Aorta (tissue), 5 donors: ENCODE measurements at regions of chr3 and their contacts with region 1.

Region 1: DNA sequence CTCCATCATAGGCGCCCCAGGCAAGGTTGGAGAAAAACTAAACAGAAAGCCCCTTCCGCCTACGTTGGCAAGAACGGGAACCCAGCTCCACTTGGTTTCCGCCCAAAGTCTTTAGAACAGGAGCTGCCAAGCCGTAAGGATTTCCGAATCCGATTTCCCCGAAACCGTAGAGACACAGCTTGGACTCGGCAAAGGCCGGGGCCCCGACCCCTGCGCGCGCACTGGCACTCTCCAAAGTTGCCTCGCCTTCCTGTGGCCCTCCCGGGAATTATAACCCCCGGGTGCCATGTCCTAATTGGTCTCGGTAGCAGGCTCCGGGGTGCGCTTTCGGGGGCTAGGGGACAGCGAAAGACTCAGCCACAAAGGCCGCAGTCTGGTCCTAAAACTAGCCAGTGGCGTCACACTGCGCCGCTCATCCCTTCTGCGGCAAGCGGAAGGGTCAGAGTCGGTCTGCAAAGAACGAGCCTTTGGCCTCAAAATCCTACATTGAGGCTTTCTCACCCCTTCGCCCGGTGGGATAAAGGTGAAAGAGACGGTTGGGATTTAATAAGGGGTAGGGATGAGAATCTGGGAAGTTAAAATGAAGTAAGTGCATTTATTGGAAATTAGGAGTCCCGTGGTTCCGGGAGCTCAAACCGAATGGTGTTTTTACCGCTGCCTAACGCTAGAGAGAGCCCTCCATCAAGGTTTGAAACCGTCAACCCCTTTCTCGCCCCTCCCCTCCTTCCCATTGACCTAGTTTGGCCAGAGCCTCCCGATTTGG is 6.8 kb downstream of the BCL6 start:
- DNase-seq: peak; percentile 90 to 93
- ATAC-seq: peak; percentile 80
- H3K4me3 ChIP-seq: peak overlapping the region; percentile 1 to 69
- H3K27ac ChIP-seq: peak overlapping the region; percentile 46 to 62
- H3K4me1 ChIP-seq: peaks cover 0 to 3% of the 10 kb centered on the region in 2 donors
- H3K27me3 ChIP-seq: no peaks in the 10 kb centered on the region

Region 2: GRCh38 chr3:186239321-186239720 is 1499.2 kb before region 1 on chr3:
- intact Hi-C with region 1: no loop called
- DNase-seq: no peak
- ATAC-seq: no peak
- H3K4me3 ChIP-seq: no peak overlapping the region
- H3K27ac ChIP-seq: no peak overlapping the region
- H3K4me1 ChIP-seq: no peaks in the 10 kb centered on the region
- H3K27me3 ChIP-seq: no peaks in the 10 kb centered on the region

Region 3: GRCh38 chr3:187841598-187841959 is 103.1 kb after region 1 on chr3:
- intact Hi-C with region 1: no loop called
- DNase-seq: no peak
- ATAC-seq: no peak
- H3K4me3 ChIP-seq: no peak overlapping the region
- H3K27ac ChIP-seq: no peak overlapping the region
- H3K4me1 ChIP-seq: no peaks in the 10 kb centered on the region
- H3K27me3 ChIP-seq: no peaks in the 10 kb centered on the region

Region 4: GRCh38 chr3:187858041-187858440 is 119.5 kb after region 1 on chr3:
- intact Hi-C with region 1: no loop called
- DNase-seq: no peak
- ATAC-seq: peak; percentile 66
- H3K4me3 ChIP-seq: no peak overlapping the region
- H3K27ac ChIP-seq: no peak overlapping the region
- H3K4me1 ChIP-seq: no peaks in the 10 kb centered on the region
- H3K27me3 ChIP-seq: no peaks in the 10 kb centered on the region

Region 5: DNA sequence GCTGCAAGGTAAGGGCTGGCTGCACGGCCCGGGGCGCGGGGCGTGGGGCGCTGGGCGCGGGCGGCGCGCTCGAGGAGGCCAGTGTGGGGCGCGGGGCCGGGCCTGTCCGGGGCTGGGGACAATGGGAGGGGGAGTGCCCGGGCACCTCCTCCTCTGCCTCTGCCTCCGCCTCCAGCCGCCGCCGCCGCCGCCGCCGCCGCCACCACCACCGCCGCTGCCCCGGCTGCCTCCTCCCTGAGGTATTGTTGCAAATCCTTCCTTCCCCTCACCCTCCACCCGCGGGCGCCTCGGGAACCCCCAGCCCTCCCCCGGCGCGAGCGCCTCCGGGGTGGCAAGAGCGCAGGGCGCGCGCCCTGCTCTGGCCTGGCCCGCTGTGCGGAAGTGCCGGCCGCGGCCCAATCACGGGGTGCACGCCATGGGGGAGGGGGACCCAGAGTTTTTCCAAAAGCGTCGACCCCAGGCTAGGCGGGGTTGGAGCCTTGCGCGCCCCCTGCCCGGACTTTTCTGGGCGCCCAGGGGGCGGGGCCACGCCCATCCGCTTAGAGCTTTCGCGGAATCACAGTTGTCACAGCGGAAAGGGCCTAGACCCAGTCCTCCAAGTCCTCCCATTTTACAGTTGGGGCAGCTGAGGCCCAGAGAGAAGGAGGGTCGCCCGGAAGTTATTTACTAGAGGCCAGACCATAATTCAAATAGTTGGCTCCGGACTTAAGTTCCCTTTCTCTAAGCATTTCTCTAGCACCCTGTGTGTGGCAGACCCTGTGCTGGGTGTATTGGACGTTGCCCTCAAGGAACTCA is 415.7 kb after region 1 on chr3 and contains the start of gene LPP:
- intact Hi-C with region 1: loop called (anchors 5 kb)
- DNase-seq: peak; percentile 90 to 92
- ATAC-seq: peak; percentile 88
- H3K4me3 ChIP-seq: peak within 1 kb of the TSS; percentile 29 to 77
- H3K27ac ChIP-seq: peak within 1 kb of the TSS; percentile 98 to 99
- H3K4me1 ChIP-seq: peaks cover 3 to 8% of the 10 kb centered on the region in 2 donors
- H3K27me3 ChIP-seq: no peaks in the 10 kb centered on the region
- total RNA-seq, gene LPP: 995 to 2,536 TPM

Region 6: GRCh38 chr3:188262913-188263683 is 524.6 kb after region 1 on chr3:
- intact Hi-C with region 1: loop called (anchors 2 to 5 kb)
- DNase-seq: peak; percentile 60 to 79
- ATAC-seq: peak; percentile 66
- H3K4me3 ChIP-seq: no peak overlapping the region
- H3K27ac ChIP-seq: peak overlapping the region; percentile 100
- H3K4me1 ChIP-seq: peaks cover 9 to 34% of the 10 kb centered on the region in 2 donors
- H3K27me3 ChIP-seq: no peaks in the 10 kb centered on the region

Region 7: DNA sequence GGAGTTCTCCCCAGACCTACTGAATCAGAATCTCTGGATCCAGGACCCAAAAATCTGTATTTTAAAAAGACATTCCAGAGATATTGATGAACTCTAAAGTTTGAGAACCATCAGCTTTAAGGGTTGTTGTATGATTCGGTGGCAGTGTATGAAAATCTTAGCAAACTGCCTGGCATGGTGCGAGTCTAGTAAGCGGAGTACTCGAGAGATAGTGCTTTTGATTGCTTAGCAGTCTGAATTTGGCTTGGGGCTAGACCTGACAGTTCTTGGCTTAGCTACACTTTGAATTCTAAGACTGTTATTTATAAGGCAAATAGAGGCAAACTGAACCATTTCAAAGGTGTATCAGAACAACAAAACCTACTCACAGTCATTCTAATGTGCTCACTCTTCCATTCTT is 744.4 kb after region 1 on chr3:
- intact Hi-C with region 1: loop called (anchors 5 to 10 kb)
- DNase-seq: no peak
- ATAC-seq: peak; percentile 22
- H3K4me3 ChIP-seq: no peak overlapping the region
- H3K27ac ChIP-seq: no peak overlapping the region
- H3K4me1 ChIP-seq: peaks cover 5 to 10% of the 10 kb centered on the region in 2 donors
- H3K27me3 ChIP-seq: no peaks in the 10 kb centered on the region

Region 8: GRCh38 chr3:188954590-188955208 is 1216.2 kb after region 1 on chr3:
- intact Hi-C with region 1: loop called (anchors 2 to 5 kb)
- DNase-seq: peak; percentile 87 to 92
- ATAC-seq: peak; percentile 88
- H3K4me3 ChIP-seq: no peak overlapping the region
- H3K27ac ChIP-seq: no peak overlapping the region
- H3K4me1 ChIP-seq: peaks cover 7 to 10% of the 10 kb centered on the region in 2 donors
- H3K27me3 ChIP-seq: no peaks in the 10 kb centered on the region

Region 9: GRCh38 chr3:189148081-189148507 is 1409.6 kb after region 1 on chr3:
- intact Hi-C with region 1: loop called (anchors 2 to 10 kb)
- DNase-seq: peak; percentile 67 to 79
- ATAC-seq: peak; percentile 88
- H3K4me3 ChIP-seq: no peak overlapping the region
- H3K27ac ChIP-seq: no peak overlapping the region
- H3K4me1 ChIP-seq: no peaks in the 10 kb centered on the region
- H3K27me3 ChIP-seq: no peaks in the 10 kb centered on the region